ENCODE measurements at regions of chr2 and their contacts with region 1.

Region 1: DNA sequence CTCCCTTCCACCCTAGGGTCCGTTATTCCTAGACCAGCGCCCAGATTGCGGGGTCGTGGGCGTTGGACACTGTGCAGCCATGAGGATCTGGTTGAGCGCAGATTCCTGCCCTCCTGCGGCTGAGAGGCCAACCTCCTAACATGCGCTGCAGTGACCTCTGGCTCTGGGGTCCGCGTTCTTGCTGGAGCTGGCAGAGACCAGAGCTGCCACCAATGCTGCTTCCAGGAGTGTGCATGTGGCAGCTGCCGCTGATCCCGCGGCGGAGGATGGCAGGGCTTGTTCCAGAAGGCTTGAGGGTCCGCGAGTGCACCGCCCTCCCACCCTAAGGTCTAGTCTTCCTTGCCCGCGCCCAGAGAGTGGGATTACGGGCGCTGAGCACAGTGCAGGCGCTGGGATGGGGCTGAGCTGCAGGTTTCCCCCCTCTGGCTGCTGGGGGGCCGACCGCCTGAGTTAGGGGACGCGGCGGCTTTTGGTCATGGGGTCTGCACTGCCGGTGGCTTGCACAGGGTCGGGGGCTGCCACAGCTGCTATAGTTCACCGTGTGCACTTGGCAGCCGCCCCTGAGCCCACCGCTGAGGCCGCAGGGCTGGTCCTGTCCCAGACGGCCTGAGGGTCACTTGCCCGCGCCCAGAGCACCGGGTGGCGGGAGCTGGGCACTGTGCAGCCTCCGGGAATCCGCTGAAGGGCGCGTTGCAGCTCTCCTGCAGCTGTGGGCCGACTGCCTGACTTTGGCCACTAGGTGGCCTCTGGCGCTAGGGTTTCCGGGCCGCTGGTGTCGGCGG is 145.9 kb downstream of the CCDC74A start:
- DNase-seq: peak; percentile 76
- ATAC-seq: peak; percentile 80
- H3K4me3 Mint-ChIP-seq: no peak overlapping the region
- H3K27ac Mint-ChIP-seq: no peak overlapping the region
- H3K4me1 Mint-ChIP-seq: peaks cover 4% of the 10 kb centered on the region
- H3K27me3 Mint-ChIP-seq: peaks cover 20% of the 10 kb centered on the region

Region 2: DNA sequence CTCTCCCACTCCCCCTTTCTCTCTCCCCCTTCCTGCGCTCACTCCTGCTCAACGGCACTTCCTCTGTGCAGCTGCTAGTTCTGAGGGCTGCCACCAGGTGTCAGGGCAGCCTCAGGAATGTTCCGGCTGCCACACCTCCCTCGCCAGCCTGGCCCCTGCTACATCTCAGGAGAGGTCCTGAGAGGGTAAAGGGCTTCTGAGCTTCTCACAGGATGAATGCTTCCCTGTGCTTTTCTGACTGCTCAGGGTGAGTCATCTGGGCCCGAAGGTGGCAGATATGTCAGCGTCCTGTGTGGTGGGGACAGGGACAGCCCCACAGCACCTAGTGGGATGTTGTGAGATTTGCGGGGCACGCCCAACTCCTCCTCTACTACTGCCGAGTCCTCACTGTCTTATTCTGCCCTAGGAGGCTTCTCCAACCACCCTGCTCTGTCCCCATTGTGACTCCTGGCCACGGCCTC is 519.5 kb before region 1 on chr2:
- CTCF ChIA-PET with region 1: interaction called, 22 read pairs
- POLR2A ChIA-PET with region 1: interaction called, 3 read pairs
- DNase-seq: peak; percentile 76
- ATAC-seq: peak; percentile 86
- H3K4me3 Mint-ChIP-seq: no peak overlapping the region
- H3K27ac Mint-ChIP-seq: peak overlapping the region; percentile 22
- H3K4me1 Mint-ChIP-seq: peaks cover 29% of the 10 kb centered on the region
- H3K27me3 Mint-ChIP-seq: no peaks in the 10 kb centered on the region

Region 3: DNA sequence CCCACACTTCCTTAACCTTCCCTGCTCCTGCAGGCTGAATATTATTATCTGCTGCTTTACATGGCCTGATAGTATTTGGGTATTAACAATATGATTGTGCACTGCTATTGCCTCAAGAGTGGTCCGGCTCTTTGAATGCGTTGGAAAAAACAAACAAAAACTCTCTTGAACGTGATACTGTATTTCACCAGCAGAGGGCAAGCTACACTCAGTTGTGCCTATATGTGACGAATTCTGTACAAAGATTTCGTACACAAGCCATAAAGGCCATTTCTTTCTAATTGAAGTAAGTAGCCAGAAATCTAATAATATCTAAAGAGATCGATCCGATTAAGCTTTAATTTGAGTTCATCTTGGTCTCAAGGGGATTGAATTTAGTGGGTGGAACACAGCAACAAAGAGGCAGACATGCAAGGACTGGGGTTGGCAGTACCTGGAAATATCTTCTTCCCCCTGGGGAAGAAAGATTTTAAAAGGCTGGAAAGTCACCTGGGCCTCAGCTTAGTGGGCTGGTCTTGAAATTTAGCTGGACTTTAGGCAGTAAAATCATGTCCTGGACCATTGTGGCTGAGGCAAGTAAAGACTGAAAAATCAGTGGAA is 260.3 kb before region 1 on chr2:
- CTCF ChIA-PET with region 1: interaction called, 36 read pairs
- POLR2A ChIA-PET with region 1: no interaction called
- DNase-seq: peak; percentile 47
- ATAC-seq: peak; percentile 57
- H3K4me3 Mint-ChIP-seq: no peak overlapping the region
- H3K27ac Mint-ChIP-seq: no peak overlapping the region
- H3K4me1 Mint-ChIP-seq: peaks cover 7% of the 10 kb centered on the region
- H3K27me3 Mint-ChIP-seq: peaks cover 23% of the 10 kb centered on the region

Region 4: GRCh38 chr2:131801210-131801744 is 127.7 kb after region 1 on chr2:
- CTCF ChIA-PET with region 1: interaction called, 25 read pairs
- POLR2A ChIA-PET with region 1: no interaction called
- DNase-seq: no peak
- ATAC-seq: no peak
- H3K4me3 Mint-ChIP-seq: no peak overlapping the region
- H3K27ac Mint-ChIP-seq: no peak overlapping the region
- H3K4me1 Mint-ChIP-seq: no peaks in the 10 kb centered on the region
- H3K27me3 Mint-ChIP-seq: peaks cover 6% of the 10 kb centered on the region